Ascending aorta (tissue), 2 donors: ENCODE measurements at regions of chr11 and their contacts with region 1.

Region 1: DNA sequence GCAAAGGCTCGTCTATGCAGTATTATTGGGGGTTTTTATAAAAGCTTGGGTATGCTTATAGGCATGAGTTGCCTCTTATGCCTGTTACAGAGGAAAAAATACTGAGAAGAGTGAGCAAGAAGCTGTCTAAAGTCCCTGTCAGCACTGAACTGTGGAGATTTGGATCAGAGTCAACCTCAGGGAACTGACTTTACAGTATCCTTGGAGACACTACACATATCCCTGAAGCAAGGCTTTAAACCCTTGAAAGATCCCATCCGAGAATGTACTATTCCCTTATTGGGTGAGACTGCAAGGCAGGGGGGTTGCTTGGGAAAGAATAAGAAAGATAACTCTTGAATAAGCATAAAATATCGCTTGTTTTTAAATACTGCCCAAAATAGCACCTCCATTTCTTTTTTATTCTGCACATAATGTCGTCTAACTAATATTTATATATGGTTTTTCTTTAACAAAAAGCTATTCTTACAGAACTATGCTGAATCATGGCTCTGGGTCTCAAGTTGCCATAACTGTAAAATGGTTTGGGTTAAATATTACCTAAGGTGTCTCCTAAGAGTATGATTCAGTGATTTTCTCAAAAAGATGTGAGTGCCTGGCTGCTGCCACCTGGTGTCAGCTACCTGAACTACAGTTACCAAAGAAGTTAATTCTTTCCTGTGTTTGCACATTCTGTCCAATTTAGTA is 1062.8 kb downstream of the DLG2 start:
- DNase-seq: peak in 1 of 2 donors; percentile 62
- H3K4me3 ChIP-seq: no peak overlapping the region
- H3K27ac ChIP-seq: no peak overlapping the region
- H3K4me1 ChIP-seq: no peaks in the 10 kb centered on the region
- H3K27me3 ChIP-seq: no peaks in the 10 kb centered on the region
- CTCF ChIP-seq: peak; percentile 21 to 78 (median 68)

Region 2: GRCh38 chr11:83827940-83828554 is 736.3 kb before region 1 on chr11:
- intact Hi-C with region 1: loop called (anchors 5 kb)
- DNase-seq: no peak
- H3K4me3 ChIP-seq: peak overlapping the region in 1 of 2 donors; percentile 43
- H3K27ac ChIP-seq: no peak overlapping the region
- H3K4me1 ChIP-seq: no peaks in the 10 kb centered on the region
- H3K27me3 ChIP-seq: no peaks in the 10 kb centered on the region
- CTCF ChIP-seq: peak; percentile 10 to 51 (median 36)

Region 3: DNA sequence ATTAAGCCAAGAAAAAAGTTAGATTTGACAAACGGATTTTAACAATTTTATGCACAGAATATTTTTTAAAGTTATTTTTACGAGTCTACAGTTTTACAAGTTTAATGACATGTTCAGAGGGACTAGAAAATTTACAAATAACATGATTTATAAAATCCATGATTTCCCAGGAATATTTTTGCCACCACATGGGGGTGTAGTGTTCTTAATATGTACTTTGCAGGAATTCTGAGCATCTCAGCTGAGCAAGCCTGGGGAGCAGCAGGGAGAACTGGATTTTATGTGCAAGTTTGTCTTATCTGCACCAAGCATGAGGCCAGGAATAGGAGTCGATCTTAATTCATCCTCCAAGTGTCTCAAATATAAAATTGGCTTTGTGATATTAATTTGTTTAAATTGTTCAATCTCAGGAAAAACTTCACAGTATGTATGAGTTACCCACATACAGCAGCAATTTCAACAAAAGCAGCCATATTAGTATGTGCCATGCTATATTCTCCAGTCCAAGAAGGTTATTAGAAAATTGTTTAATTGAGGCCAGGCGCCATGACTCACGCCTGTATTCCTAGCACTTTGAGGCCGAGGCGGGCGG is 236.5 kb after region 1 on chr11:
- intact Hi-C with region 1: no loop called
- DNase-seq: no peak
- H3K4me3 ChIP-seq: no peak overlapping the region
- H3K27ac ChIP-seq: no peak overlapping the region
- H3K4me1 ChIP-seq: peaks cover 0 to 4% of the 10 kb centered on the region in 2 donors
- H3K27me3 ChIP-seq: no peaks in the 10 kb centered on the region
- CTCF ChIP-seq: no peak

Region 4: GRCh38 chr11:84899740-84900139 is 335.4 kb after region 1 on chr11:
- intact Hi-C with region 1: no loop called
- DNase-seq: no peak
- H3K4me3 ChIP-seq: no peak overlapping the region
- H3K27ac ChIP-seq: no peak overlapping the region
- H3K4me1 ChIP-seq: no peaks in the 10 kb centered on the region
- H3K27me3 ChIP-seq: no peaks in the 10 kb centered on the region
- CTCF ChIP-seq: no peak

Region 5: GRCh38 chr11:85431319-85431718 is 867.0 kb after region 1 on chr11:
- intact Hi-C with region 1: no loop called
- DNase-seq: no peak
- H3K4me3 ChIP-seq: no peak overlapping the region
- H3K27ac ChIP-seq: no peak overlapping the region
- H3K4me1 ChIP-seq: no peaks in the 10 kb centered on the region
- H3K27me3 ChIP-seq: no peaks in the 10 kb centered on the region
- CTCF ChIP-seq: no peak